ENCODE measurements at regions of chr5 and their contacts with region 1.

Region 1: DNA sequence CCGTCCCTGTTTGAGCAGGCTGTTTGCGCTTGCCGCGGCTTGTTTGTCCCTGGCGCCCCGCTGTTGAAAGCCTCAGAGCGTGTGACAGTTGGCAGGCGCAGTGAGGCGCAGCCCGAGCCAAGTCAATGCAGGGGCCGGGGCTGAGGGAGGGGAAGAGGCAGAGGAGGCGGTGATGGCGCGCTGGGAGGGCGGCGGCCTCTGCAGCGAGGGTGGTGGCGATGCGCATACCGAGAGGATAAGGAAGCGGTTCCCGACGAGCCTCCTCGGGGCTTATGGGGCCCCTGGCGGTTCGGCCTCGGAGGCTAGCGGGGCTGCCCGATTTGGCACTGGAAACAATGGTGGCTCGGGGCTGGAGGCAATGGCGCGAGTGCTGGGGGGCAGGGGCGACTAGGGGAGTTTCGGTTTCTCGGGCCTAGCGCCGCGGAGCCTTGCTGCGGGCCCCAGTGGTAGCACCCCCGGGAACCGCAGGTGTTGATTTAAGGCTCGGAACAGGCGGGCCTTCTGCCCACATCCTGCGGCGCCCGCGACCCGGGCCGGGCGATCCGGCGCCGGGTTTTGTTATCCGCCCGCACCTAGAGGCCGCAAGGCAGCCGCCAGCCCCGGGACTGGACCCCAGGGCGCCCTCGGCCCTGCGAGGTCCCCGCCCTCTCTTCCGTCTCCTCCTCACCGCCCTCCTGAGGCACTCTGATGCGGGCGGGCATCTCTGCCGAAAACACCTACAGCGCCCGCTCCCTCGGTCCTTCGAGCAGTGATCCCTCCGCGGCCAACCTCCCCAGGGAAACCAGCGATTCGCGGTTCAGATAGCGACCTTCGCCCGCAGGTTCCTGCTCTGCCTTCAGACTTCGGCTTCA is 947 bp upstream of the LNPEP start:
- DNase-seq: peak; percentile 95
- H3K4me3 ChIP-seq: peak overlapping the region; percentile 72 to 90 (median 88)
- H3K27ac ChIP-seq: peak overlapping the region; percentile 97 to 99 (median 98)
- H3K4me1 ChIP-seq: peaks cover 14 to 51% (median 25%) of the 10 kb centered on the region in 4 donors
- H3K27me3 ChIP-seq: no peaks in the 10 kb centered on the region
- CTCF ChIP-seq: peak in 2 of 5 experiments; percentile 37 to 50
- EP300 ChIP-seq: no peak
- POLR2A ChIP-seq: peak; percentile 77

Region 2: GRCh38 chr5:96662725-96663513 is 272.0 kb before region 1 on chr5:
- in situ Hi-C with region 1: no loop called
- intact Hi-C with region 1: loop called (anchors 1 kb)
- DNase-seq: peak; percentile 97
- H3K4me3 ChIP-seq: peak overlapping the region; percentile 66 to 94 (median 84)
- H3K27ac ChIP-seq: peak overlapping the region; percentile 97 to 100 (median 98)
- H3K4me1 ChIP-seq: peaks cover 15 to 72% (median 45%) of the 10 kb centered on the region in 4 donors
- H3K27me3 ChIP-seq: no peaks in the 10 kb centered on the region
- CTCF ChIP-seq: no peak
- EP300 ChIP-seq: peak; percentile 60
- POLR2A ChIP-seq: peak; percentile 92

Region 3: DNA sequence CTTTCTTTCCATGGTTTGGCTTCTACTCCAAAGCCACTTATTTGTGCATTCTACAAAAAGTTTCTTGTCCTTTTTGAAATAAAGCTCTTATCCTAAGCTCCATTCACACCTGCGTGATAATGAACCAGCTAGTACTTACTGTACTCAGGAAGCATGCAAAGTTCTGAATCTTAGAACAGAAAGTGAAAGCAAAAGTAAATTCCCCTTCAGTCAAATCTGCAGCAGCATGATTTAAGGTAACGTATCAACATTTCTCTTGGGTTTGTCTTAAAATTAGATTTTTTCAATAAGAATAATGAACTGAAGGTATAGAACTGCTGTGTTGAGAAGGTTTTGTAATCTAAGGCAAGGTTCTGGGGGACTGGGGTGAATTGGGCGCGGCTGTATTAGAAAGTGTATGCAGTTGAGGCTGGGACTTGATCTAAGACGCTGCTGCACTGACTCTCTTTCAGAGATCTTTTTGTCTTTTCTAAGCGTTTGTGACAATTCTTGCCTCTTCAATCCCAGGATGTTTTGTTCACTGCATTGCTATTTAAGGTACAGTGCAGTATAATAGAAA is 58.6 kb before region 1 on chr5 and contains the start of gene ERAP2:
- in situ Hi-C with region 1: no loop called
- intact Hi-C with region 1: no loop called
- DNase-seq: no peak
- H3K4me3 ChIP-seq: peak within 1 kb of the TSS; percentile 49 to 80 (median 68)
- H3K27ac ChIP-seq: peak within 1 kb of the TSS; percentile 78 to 88 (median 86)
- H3K4me1 ChIP-seq: peaks cover 9 to 44% (median 20%) of the 10 kb centered on the region in 4 donors
- H3K27me3 ChIP-seq: no peaks in the 10 kb centered on the region
- CTCF ChIP-seq: no peak
- EP300 ChIP-seq: no peak
- POLR2A ChIP-seq: no peak
- total RNA-seq, gene ERAP2: 7.1 to 39.1 (median 33.1) TPM

Region 4: DNA sequence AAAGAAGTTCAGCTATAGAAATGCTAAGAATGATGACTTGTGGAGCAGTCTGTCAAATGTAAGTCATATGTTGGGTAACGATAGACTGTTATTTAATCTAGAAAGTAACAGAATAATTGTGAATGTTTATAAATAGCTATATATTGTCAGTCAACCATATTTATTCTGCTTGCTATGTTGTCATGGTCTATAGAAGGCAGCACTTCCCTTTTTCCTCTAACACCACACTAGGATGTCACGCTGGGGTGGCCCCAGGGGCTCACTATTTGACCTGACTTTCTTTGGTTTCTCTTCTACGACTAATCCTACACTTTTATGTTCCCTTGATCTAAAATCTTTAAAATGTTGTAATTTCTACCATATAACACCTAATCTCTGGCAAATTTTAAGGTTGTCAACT is 38.1 kb before region 1 on chr5:
- in situ Hi-C with region 1: no loop called
- intact Hi-C with region 1: no loop called
- DNase-seq: peak; percentile 15
- H3K4me3 ChIP-seq: no peak overlapping the region
- H3K27ac ChIP-seq: no peak overlapping the region
- H3K4me1 ChIP-seq: no peaks in the 10 kb centered on the region
- H3K27me3 ChIP-seq: no peaks in the 10 kb centered on the region
- CTCF ChIP-seq: no peak
- EP300 ChIP-seq: no peak
- POLR2A ChIP-seq: no peak